ENCODE measurements at regions of chr16 and their contacts with region 1.

Region 1: GRCh38 chr16:21300309-21301167 is 22.4 kb upstream of the CRYM start:
- DNase-seq: peak; percentile 77
- H3K4me3 Mint-ChIP-seq: peak overlapping the region; percentile 90
- H3K27ac Mint-ChIP-seq: no peak overlapping the region
- H3K4me1 Mint-ChIP-seq: peaks cover 33% of the 10 kb centered on the region
- H3K27me3 Mint-ChIP-seq: peaks cover 4% of the 10 kb centered on the region

Region 2: GRCh38 chr16:20900299-20901067 is 400.1 kb before region 1 on chr16 and contains the starts of genes DCUN1D3 and LYRM1:
- CTCF ChIA-PET with region 1: no interaction called
- POLR2A ChIA-PET with region 1: no interaction called
- intact Hi-C with region 1: loop called (anchors 10 kb)
- DNase-seq: peak; percentile 94
- H3K4me3 Mint-ChIP-seq: peak within 1 kb of the TSS; percentile 81
- H3K27ac Mint-ChIP-seq: peak within 1 kb of the TSS; percentile 93
- H3K4me1 Mint-ChIP-seq: peaks cover 72% of the 10 kb centered on the region
- H3K27me3 Mint-ChIP-seq: no peaks in the 10 kb centered on the region
- total RNA-seq, gene DCUN1D3: 5.9 TPM
- total RNA-seq, gene LYRM1: 26.5 to 28.0 TPM

Region 3: DNA sequence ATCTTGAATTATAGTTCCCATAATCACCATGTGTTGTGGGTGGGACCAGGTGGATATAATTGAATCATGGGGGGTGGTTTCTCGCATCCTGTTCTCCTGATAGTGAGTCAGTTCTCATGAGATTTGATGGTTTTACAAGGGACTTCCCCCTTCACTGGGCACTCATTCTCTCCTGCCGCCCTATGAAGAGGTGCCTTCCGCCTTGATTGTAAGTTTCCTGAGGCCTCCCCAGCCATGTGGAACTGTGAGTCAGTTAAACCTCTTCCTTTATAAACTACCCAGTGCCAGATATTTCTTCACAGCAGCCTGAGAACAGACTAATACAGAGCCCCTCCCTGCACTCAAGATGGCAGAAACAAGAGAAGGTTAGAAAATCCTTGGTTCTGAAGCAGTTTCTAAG is 115.7 kb before region 1 on chr16:
- CTCF ChIA-PET with region 1: interaction called, 27 read pairs
- POLR2A ChIA-PET with region 1: no interaction called
- intact Hi-C with region 1: loop called (anchors 1 kb)
- DNase-seq: peak; percentile 48
- H3K4me3 Mint-ChIP-seq: no peak overlapping the region
- H3K27ac Mint-ChIP-seq: no peak overlapping the region
- H3K4me1 Mint-ChIP-seq: peaks cover 22% of the 10 kb centered on the region
- H3K27me3 Mint-ChIP-seq: peaks cover 2% of the 10 kb centered on the region

Region 4: DNA sequence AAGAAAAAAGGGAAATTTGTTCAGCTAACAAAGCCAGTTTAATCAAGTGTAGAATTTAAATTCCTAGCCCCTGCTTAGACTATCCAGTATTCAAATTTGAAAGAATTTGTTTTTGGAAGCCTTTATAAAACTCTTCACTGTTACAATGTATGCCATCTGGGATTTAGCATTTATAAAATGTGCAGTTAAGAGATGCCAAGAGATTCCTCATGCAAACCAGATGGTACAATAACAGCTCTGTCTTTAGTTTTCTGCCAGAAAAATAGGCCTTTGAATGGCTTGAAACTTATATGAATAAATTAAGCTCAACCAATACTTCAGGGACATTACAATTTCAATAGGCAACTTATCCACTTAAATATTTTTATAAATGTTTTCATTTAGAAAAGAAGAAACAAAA is 73.8 kb before region 1 on chr16:
- CTCF ChIA-PET with region 1: no interaction called
- POLR2A ChIA-PET with region 1: no interaction called
- intact Hi-C with region 1: no loop called
- DNase-seq: no peak
- H3K4me3 Mint-ChIP-seq: no peak overlapping the region
- H3K27ac Mint-ChIP-seq: no peak overlapping the region
- H3K4me1 Mint-ChIP-seq: peaks cover 6% of the 10 kb centered on the region
- H3K27me3 Mint-ChIP-seq: peaks cover 35% of the 10 kb centered on the region

Region 5: GRCh38 chr16:21277927-21278706 is 22.4 kb before region 1 on chr16 and contains the start of gene CRYM:
- CTCF ChIA-PET with region 1: interaction called, 11 read pairs
- POLR2A ChIA-PET with region 1: no interaction called
- intact Hi-C with region 1: no loop called
- DNase-seq: peak; percentile 68
- H3K4me3 Mint-ChIP-seq: peak within 1 kb of the TSS; percentile 25
- H3K27ac Mint-ChIP-seq: no peak within 1 kb of the TSS
- H3K4me1 Mint-ChIP-seq: no peaks in the 10 kb centered on the region
- H3K27me3 Mint-ChIP-seq: peaks cover 54% of the 10 kb centered on the region
- total RNA-seq, gene CRYM: not detected

Region 6: DNA sequence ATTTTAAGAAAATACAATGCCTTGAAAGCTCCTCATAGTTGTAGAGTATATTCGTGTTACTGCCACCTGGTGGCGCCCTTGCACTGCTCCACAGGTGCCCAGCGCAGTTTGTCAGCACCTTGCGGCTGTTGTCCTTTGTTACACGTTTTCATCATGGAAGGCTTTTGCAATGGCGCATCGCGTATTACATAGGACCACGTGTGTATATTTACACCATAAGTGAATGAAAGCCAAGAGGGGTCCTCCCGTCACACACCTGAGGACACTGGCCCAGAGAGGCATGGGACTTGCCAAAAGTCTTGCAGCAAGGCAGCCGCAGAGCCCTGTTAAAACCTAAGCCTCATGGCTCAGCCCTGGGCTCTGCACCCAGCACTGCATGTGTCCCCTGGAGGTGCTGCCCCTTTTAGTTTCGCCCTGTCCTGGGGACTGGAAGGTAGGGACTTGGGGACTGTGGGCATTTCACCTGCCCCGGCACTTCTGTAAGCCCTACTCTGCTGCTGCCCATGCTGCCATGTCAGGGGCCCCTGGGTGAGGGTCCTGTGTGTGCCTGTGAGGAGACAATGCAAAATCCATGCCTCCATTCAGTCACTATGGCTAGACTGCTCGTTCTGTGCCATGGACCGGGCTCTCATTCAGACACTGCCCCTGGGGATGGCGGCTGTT is 1020.9 kb after region 1 on chr16:
- CTCF ChIA-PET with region 1: no interaction called
- POLR2A ChIA-PET with region 1: no interaction called
- intact Hi-C with region 1: loop called (anchors 10 kb)
- DNase-seq: peak; percentile 82
- H3K4me3 Mint-ChIP-seq: no peak overlapping the region
- H3K27ac Mint-ChIP-seq: peak overlapping the region; percentile 38
- H3K4me1 Mint-ChIP-seq: peaks cover 9% of the 10 kb centered on the region
- H3K27me3 Mint-ChIP-seq: no peaks in the 10 kb centered on the region